Natural killer cell (primary cell): ENCODE measurements at regions of chr6 and their contacts with region 1.

Region 1: DNA sequence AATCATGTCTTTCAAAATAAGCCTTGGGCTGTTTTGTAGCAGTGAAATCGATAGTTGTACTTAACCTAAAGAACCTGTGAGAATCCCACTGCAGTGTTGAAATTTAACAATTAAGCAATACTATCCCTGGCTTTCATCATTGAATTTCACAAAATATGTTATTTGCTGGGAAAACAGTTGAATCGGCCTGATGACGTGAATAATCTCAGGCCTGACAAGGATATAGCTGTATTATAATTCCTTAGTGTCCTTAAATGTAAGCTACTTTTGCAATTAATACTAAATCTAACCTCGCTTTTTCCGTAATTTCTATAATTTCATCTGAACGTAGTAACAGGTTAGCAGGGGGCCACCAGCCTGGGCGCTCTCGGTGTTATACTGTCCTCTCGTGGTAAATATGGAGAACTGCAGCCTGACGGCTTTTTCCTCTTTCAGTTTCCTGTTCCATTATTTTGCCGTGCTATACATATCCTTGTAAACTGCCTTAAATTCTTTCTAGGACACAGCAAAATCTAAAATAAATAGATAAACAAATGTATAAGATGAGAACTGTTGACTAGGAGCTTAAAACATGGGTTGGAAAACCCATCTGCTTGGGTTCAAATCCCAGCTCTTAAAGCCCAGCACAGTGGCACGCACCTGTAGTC is 24.0 kb downstream of the MTFR2 start:
- DNase-seq: peak; percentile 43 to 79
- ATAC-seq: peak; percentile 94 to 98 (median 96)
- H3K4me3 ChIP-seq: peak overlapping the region; percentile 2
- H3K4me3 Mint-ChIP-seq: peak overlapping the region; percentile 79
- H3K27ac ChIP-seq: no peak overlapping the region
- H3K27ac Mint-ChIP-seq: peak overlapping the region in 1 of 2 donors; percentile 71
- H3K4me1 ChIP-seq: peaks cover 4% of the 10 kb centered on the region
- H3K4me1 Mint-ChIP-seq: peaks cover 10 to 11% of the 10 kb centered on the region in 2 donors
- H3K27me3 ChIP-seq: no peaks in the 10 kb centered on the region
- H3K27me3 Mint-ChIP-seq: peaks cover 0 to 5% of the 10 kb centered on the region in 2 donors
- CTCF ChIP-seq: peak; percentile 100

Region 2: GRCh38 chr6:135451693-135452092 is 774.5 kb before region 1 on chr6:
- intact Hi-C with region 1: loop called (anchors 1 kb)
- DNase-seq: peak in 1 of 2 donors; percentile 68
- ATAC-seq: peak; percentile 49 to 60 (median 52)
- H3K4me3 ChIP-seq: no peak overlapping the region
- H3K4me3 Mint-ChIP-seq: no peak overlapping the region
- H3K27ac ChIP-seq: no peak overlapping the region
- H3K27ac Mint-ChIP-seq: no peak overlapping the region
- H3K4me1 ChIP-seq: no peaks in the 10 kb centered on the region
- H3K4me1 Mint-ChIP-seq: no peaks in the 10 kb centered on the region
- H3K27me3 ChIP-seq: no peaks in the 10 kb centered on the region
- H3K27me3 Mint-ChIP-seq: no peaks in the 10 kb centered on the region
- CTCF ChIP-seq: peak; percentile 80

Region 3: DNA sequence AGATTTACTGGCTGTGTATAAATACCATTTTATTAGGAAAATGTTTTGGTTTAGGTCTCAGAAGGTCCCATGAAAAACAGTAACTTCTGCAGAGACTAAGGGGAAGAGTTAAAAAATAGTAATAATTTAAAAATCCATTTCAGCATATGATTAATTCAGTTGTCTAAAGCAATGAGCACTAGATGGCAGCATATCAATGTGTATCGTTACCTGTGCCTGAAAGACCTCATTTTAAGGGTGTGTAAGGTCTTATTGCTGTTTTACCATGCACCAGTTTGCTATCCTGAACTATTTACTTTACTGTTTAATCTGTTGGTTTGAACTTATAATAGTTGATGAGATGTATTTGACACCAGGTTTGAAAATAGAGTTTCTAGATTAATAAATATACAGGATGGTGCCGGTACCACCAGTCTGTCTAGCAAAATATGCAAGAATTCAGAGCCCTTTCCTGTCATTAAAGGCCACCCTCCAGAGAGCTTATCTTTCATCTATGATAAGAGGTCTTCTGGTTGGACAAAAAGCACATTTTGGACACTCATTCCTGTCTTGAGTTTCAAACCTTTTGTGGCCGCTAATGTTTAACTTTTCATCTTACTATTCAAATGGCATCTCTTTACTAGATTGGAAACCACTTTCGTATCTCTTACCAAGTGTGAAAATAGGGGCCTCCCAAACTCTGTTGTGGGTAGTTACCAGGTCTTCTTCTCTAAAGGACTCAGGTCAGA is 719.7 kb before region 1 on chr6:
- intact Hi-C with region 1: loop called (anchors 1 kb)
- DNase-seq: peak in 1 of 2 donors; percentile 75
- ATAC-seq: peak; percentile 87 to 91 (median 88)
- H3K4me3 ChIP-seq: no peak overlapping the region
- H3K4me3 Mint-ChIP-seq: peak overlapping the region; percentile 17
- H3K27ac ChIP-seq: no peak overlapping the region
- H3K27ac Mint-ChIP-seq: peak overlapping the region; percentile 14 to 27
- H3K4me1 ChIP-seq: peaks cover 4% of the 10 kb centered on the region
- H3K4me1 Mint-ChIP-seq: peaks cover 6 to 8% of the 10 kb centered on the region in 2 donors
- H3K27me3 ChIP-seq: no peaks in the 10 kb centered on the region
- H3K27me3 Mint-ChIP-seq: no peaks in the 10 kb centered on the region
- CTCF ChIP-seq: peak; percentile 75

Region 4: GRCh38 chr6:135675862-135676261 is 550.3 kb before region 1 on chr6:
- intact Hi-C with region 1: loop called (anchors 1 kb)
- DNase-seq: peak in 1 of 2 donors; percentile 80
- ATAC-seq: peak in 2 of 3 donors; percentile 70 to 74
- H3K4me3 ChIP-seq: no peak overlapping the region
- H3K4me3 Mint-ChIP-seq: no peak overlapping the region
- H3K27ac ChIP-seq: no peak overlapping the region
- H3K27ac Mint-ChIP-seq: no peak overlapping the region
- H3K4me1 ChIP-seq: no peaks in the 10 kb centered on the region
- H3K4me1 Mint-ChIP-seq: no peaks in the 10 kb centered on the region
- H3K27me3 ChIP-seq: no peaks in the 10 kb centered on the region
- H3K27me3 Mint-ChIP-seq: no peaks in the 10 kb centered on the region
- CTCF ChIP-seq: peak; percentile 58